ENCODE measurements at regions of chr20 and their contacts with region 1.

Region 1: DNA sequence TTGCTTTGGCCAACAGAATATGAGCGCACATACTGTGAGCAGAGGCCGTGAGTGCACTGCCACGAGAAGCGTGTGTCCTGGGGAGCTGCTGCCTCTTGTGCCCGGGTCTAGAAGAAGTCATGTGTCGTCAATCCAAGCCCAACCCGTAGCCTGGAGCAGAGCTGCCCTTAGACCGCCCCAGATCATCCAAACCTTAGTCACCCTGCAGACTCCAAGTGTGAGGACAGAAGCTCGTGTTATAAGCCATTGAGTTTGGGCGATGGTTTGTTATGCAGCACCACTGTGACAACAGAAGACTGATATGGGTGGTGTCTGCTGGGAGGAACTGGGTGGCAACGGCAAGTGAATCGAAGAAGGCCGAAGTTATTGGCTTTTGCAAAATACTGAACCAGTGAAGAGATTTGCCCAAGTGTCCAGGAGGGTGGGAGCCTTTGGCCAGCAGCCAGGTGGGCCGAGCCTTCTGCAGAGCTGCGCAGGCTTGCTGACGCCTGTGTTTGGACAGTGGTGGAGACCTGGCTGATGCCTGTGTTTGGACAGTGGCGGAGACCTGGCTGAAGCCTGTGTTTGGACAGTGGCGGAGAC is 101.3 kb upstream of the SULF2 start:
- DNase-seq: no peak
- ATAC-seq: no peak
- H3K4me3 ChIP-seq: no peak overlapping the region
- H3K27ac ChIP-seq: no peak overlapping the region
- H3K4me1 ChIP-seq: no peaks in the 10 kb centered on the region
- H3K27me3 ChIP-seq: peaks cover 0 to 11% (median 2%) of the 10 kb centered on the region in 9 donors
- CTCF ChIP-seq: no peak
- POLR2A ChIP-seq: no peak

Region 2: DNA sequence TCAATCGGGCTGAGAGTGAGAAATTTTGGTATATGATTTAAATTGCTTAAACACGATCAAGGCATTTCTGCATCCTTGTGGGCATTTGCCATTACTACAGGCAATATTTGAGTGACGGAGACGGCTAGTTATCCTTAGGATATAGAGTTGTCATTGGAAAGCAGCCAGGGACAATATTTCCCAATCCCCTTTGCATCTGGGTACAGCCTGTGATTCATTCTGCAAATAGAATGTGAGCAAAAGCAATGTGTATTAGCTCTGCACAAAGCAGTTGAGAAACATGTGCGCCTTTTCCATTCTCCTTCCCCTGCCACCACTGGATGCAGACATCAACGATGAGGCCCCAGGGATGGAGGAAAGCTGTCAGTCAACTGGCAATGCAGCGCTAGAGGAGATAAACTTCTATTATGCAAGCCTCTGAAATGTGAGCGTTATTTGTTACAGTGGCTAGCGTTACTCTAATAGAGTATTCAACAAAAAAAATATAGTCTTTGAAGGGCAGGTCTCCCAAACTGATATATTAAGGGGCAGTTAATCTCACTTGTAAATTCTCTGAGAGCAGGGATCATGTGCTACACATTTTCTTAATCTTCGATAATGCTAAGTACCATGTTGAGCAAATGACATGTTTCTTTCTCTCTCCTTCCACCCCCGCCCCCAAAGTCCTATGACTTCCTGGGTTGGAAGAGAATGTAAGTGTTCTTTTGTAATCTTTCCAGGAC is 422.0 kb before region 1 on chr20:
- intact Hi-C with region 1: no loop called
- DNase-seq: peak; percentile 28 to 81 (median 65)
- ATAC-seq: peak; percentile 91 to 98 (median 95)
- H3K4me3 ChIP-seq: no peak overlapping the region
- H3K27ac ChIP-seq: peak overlapping the region in 11 of 12 donors; percentile 12 to 69 (median 50)
- H3K4me1 ChIP-seq: peaks cover 0 to 23% (median 9%) of the 10 kb centered on the region in 12 donors
- H3K27me3 ChIP-seq: no peaks in the 10 kb centered on the region
- CTCF ChIP-seq: peak in 10 of 12 donors; percentile 12 to 53 (median 38)
- POLR2A ChIP-seq: no peak

Region 3: DNA sequence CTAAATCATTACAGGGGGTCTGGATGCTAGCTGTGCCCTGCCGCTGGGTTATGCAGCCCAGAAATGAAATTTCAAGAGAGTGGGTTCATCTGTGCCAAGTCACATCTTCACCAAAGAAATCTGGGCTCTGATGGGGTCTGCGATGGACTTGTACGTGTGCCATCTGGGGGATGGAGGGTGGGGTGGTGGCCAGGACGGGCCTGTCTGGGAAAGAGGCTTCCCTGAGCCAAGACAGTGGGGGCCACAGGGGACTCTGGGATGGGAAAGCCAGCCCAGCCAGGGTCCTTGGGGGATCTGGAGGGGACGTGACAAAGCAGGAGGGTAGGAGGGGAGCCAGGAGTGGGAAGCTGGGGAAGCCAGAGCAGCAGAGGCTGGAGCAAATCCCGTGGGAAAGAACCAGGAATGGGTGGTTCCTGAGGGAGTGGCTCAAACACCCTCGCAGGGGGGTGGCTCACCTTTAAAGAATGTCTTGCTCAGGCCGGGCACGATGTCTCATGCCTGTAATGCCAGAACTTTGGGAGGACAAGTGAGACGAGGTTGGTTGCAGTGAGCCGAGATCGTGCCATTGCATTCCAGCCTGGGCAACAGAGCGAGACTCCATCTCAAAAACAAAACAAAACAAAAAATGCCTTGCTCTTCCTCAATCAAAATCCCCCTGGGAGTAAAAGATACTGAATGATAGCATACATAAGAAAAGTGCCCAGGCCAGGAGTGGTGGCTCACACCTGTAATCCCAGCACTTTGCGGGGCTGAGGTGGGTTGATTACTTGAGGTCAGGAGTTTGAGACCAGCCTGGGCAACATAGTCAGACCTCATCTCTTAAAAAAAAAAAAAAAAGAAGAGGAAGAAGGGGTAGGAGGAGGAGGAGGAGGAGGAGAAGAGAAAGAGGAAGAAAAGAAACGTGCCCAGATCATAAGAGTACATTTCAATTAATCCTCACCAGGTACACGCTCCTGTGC is 64.8 kb before region 1 on chr20:
- intact Hi-C with region 1: loop called in 1 of 10 experiments (anchors 10 kb)
- DNase-seq: no peak
- ATAC-seq: no peak
- H3K4me3 ChIP-seq: no peak overlapping the region
- H3K27ac ChIP-seq: no peak overlapping the region
- H3K4me1 ChIP-seq: no peaks in the 10 kb centered on the region
- H3K27me3 ChIP-seq: peaks cover 0 to 53% (median 16%) of the 10 kb centered on the region in 9 donors
- CTCF ChIP-seq: no peak
- POLR2A ChIP-seq: no peak

Region 4: GRCh38 chr20:47847868-47848531 is 38.6 kb before region 1 on chr20:
- intact Hi-C with region 1: loop called in 3 of 10 experiments (anchors 5 to 10 kb)
- DNase-seq: no peak
- ATAC-seq: peak in 1 of 4 donors; percentile 9
- H3K4me3 ChIP-seq: no peak overlapping the region
- H3K27ac ChIP-seq: no peak overlapping the region
- H3K4me1 ChIP-seq: peaks cover 0 to 3% (median 0%) of the 10 kb centered on the region in 12 donors
- H3K27me3 ChIP-seq: peaks cover 0 to 7% (median 0%) of the 10 kb centered on the region in 9 donors
- CTCF ChIP-seq: no peak
- POLR2A ChIP-seq: no peak

Region 5: GRCh38 chr20:47929363-47930123 is 43.0 kb after region 1 on chr20:
- intact Hi-C with region 1: no loop called
- DNase-seq: no peak
- ATAC-seq: peak in 2 of 4 donors; percentile 22 to 60
- H3K4me3 ChIP-seq: no peak overlapping the region
- H3K27ac ChIP-seq: no peak overlapping the region
- H3K4me1 ChIP-seq: no peaks in the 10 kb centered on the region
- H3K27me3 ChIP-seq: peaks cover 0 to 8% (median under 1%) of the 10 kb centered on the region in 9 donors
- CTCF ChIP-seq: no peak
- POLR2A ChIP-seq: no peak

Region 6: DNA sequence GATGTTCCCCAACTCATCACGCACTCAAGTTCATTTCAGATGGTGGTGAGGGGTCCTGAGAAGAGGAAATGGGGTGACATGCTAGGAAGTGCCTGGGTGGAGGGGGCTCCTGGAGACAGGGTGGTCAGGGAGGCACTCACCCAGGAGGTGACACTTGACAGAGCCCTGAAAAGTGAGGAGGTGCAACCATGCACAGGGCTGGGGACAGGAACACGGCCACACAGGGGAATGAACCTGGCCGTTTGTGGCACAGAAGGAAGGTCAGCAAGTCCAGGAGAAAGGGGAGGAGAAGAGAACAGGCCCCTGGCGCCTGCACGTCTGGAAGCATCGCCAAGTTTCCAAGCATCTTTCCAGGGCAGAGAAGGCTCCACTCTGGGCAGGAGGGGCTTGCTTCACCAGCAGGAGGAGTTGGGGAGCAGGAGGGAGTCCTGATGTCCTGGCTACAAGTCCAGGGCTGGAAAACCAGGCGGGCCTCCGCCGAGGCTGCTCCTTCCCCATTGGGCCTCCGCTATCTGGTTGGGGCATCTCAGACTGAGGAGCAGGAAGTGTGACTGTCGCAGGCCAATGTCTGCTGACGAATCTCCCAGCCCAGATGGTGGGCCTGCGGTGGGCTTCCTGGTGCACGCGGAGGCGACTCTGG is 519.2 kb after region 1 on chr20:
- intact Hi-C with region 1: loop called in 1 of 10 experiments (anchors 10 kb)
- DNase-seq: peak in 1 of 5 donors; percentile 33
- ATAC-seq: no peak
- H3K4me3 ChIP-seq: no peak overlapping the region
- H3K27ac ChIP-seq: no peak overlapping the region
- H3K4me1 ChIP-seq: peaks cover 0 to 7% (median 0%) of the 10 kb centered on the region in 12 donors
- H3K27me3 ChIP-seq: peaks cover 0 to 2% (median 0%) of the 10 kb centered on the region in 9 donors
- CTCF ChIP-seq: peak in 2 of 12 donors; percentile 18 to 29
- POLR2A ChIP-seq: no peak

Region 7: GRCh38 chr20:48523212-48523941 is 636.8 kb after region 1 on chr20:
- intact Hi-C with region 1: loop called in 2 of 10 experiments (anchors 10 kb)
- DNase-seq: peak in 1 of 5 donors; percentile 43
- ATAC-seq: peak in 3 of 4 donors; percentile 57 to 83 (median 58)
- H3K4me3 ChIP-seq: no peak overlapping the region
- H3K27ac ChIP-seq: no peak overlapping the region
- H3K4me1 ChIP-seq: no peaks in the 10 kb centered on the region
- H3K27me3 ChIP-seq: peaks cover 0 to 11% (median 0%) of the 10 kb centered on the region in 9 donors
- CTCF ChIP-seq: no peak
- POLR2A ChIP-seq: no peak

Measured in heart left ventricle (tissue), 16 donors.